Posterior vena cava (tissue), 2 donors: ENCODE measurements at regions of chr3 and their contacts with region 1.

Region 1: GRCh38 chr3:170414202-170414663 is 4.4 kb upstream of the CLDN11 start:
- DNase-seq: no peak

Region 2: DNA sequence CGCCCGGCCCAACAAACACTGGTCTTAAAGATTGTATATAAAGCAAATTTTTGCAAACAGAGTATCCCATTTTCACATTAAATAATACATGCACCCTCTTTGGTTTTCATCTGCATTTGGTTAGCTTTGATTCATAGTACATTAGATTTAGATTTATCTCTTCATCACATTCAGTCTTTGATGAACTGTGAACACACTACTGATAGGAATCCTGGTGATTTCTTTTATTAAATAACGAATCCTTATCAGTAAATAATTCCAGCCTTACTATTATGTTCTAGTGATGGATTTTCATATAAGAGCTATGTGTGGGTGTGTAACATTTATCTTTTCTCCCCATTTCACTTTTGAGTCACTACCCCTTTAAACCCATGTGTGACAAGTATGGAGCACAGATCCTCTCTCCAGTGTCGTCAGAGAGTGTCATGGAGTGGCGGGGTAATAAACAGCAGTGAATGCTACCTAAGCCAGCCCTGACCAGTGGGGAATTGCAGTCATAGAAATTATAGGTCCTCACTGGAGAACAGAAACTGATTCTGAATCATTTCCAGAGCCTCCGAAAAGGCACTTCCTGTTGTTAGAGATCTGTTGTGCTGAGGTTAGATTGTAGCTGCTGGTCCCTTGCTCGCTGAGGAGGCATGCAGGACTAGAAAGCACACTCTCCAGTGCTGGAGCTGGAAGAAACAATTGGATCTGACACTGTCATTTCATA is 149.6 kb after region 1 on chr3:
- intact Hi-C with region 1: no loop called
- DNase-seq: no peak

Region 3: GRCh38 chr3:170811928-170812591 is 397.8 kb after region 1 on chr3:
- intact Hi-C with region 1: loop called (anchors 5 kb)
- DNase-seq: peak; percentile 83